Panc1 (cell line): ENCODE measurements at regions of chr10 and their contacts with region 1.

Region 1: DNA sequence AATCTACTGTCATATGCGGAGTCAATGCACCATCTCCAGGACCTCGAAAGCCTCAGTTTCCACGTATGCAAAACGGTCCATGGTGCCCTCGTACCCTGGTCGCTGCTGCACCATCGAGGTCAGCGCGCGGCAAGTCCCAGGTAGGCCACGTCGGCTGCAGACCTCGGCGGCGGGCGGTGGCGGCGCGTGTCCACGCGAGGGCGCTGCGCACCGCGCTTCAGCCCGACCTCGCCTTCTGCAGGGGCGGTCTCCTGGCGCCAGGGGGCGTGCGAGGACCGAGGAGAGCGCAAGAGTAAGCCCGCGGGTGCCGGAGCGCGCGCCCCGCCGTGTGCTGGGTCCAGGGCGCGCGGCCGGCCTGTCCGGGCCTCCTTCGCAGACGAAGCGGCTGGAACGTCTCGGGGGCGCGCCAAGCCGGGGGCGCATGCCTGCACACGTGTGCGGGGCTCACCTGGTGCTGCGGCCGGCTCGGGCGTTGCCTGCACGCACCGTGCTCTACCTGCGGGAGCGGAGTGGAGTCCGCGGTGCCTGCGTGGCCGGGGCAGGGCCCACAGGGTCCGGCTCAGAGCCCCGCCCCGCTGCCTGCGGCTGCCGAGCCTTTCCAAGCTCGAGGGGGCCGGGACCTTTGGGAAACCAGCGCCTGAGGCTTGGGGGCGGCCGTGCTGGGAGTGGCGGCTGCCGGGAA is 54.0 kb downstream of the GLRX3 start:
- DNase-seq: peak; percentile 43
- ATAC-seq: peak; percentile 92
- H3K4me3 ChIP-seq: peak overlapping the region; percentile 37 to 41
- H3K27ac ChIP-seq: no peak overlapping the region
- H3K4me1 ChIP-seq: no peaks in the 10 kb centered on the region; the same call in 1 of the 2 replicates
- H3K27me3 ChIP-seq: no peaks in the 10 kb centered on the region
- CTCF ChIP-seq: peak; percentile 100

Region 2: GRCh38 chr10:130160765-130161164 is 29.4 kb before region 1 on chr10:
- CTCF ChIA-PET with region 1: no interaction called
- POLR2A ChIA-PET with region 1: no interaction called
- in situ Hi-C with region 1: no loop called
- intact Hi-C with region 1: no loop called
- DNase-seq: no peak
- ATAC-seq: no peak
- H3K4me3 ChIP-seq: no peak overlapping the region
- H3K27ac ChIP-seq: no peak overlapping the region
- H3K4me1 ChIP-seq: peaks cover 3% of the 10 kb centered on the region; the same call in 1 of the 2 replicates
- H3K27me3 ChIP-seq: no peaks in the 10 kb centered on the region
- CTCF ChIP-seq: peak; percentile 31

Region 3: DNA sequence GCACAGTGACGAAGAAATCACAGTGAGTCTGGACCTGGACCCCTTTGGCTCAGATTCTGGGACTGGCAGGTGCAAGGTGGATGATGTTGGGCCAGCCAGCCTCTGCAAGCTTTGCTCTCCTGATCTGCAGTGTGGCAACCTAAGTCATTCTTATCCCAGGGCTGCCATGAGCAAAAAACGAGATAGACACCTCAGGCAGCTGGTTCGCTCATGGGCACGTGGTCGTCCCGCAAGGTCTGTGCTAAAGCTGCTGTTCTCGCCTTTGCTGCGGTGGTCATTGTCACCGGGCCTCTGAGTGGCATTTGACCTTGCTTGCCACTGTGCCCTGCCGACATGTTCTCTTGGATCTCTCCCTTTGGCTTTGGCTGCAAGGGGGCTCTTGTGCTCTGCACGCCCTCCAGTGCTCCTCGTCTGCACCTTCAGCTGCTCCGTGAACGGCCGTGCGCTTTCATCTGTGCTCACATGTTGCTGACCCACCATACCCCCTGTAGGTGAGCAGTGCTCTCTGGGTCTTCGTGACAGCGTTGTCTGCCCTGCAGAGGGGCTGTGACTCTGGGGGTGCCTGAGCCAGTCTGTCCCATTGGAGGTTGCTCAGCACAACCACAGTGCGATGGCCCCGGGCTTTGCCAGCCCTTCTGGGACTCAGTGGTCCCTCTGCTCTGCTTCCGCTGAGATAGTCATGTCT is 263.0 kb after region 1 on chr10:
- CTCF ChIA-PET with region 1: no interaction called
- POLR2A ChIA-PET with region 1: no interaction called
- in situ Hi-C with region 1: no loop called
- intact Hi-C with region 1: no loop called
- DNase-seq: no peak
- ATAC-seq: no peak
- H3K4me3 ChIP-seq: no peak overlapping the region
- H3K27ac ChIP-seq: no peak overlapping the region
- H3K4me1 ChIP-seq: no peaks in the 10 kb centered on the region
- H3K27me3 ChIP-seq: peaks cover 15% of the 10 kb centered on the region
- CTCF ChIP-seq: no peak

Region 4: DNA sequence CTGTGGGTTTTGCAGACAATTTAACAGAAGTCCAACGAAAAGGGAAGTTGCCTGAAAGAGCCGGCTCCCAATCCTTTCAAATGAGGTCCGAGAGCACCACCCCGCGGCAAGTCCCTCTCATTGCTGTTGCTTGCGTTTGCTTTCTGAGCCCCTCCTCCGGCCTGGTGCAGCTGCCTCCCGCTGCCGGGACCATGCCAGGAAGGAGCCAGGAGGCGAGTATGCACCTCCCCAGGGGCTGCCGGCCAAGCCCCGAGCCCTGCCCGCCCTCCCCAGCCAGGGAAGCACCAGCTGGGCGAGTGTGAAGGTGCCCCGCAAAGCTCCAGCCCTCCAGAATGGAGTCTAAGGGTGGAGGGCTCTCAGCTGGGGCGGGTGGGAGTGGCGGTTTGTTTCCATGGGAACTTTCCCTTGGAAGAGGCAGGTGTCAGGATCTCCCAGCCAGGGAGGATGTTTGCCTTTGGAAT is 1684.8 kb after region 1 on chr10:
- CTCF ChIA-PET with region 1: no interaction called
- POLR2A ChIA-PET with region 1: no interaction called
- in situ Hi-C with region 1: no loop called
- intact Hi-C with region 1: loop called (anchors 10 kb)
- DNase-seq: peak; percentile 50
- ATAC-seq: peak; percentile 82
- H3K4me3 ChIP-seq: peak overlapping the region; percentile 8 to 11; a peak in 1 of 4 replicates
- H3K27ac ChIP-seq: no peak overlapping the region
- H3K4me1 ChIP-seq: peaks cover 8% of the 10 kb centered on the region
- H3K27me3 ChIP-seq: peaks cover 13% of the 10 kb centered on the region
- CTCF ChIP-seq: peak; percentile 92